ENCODE measurements at regions of chr20 and their contacts with region 1.

Region 1: GRCh38 chr20:41136680-41137613 is at the start of gene PLCG1:
- DNase-seq: peak; percentile 88
- H3K4me3 Mint-ChIP-seq: peak within 1 kb of the TSS; percentile 84
- H3K27ac Mint-ChIP-seq: peak within 1 kb of the TSS; percentile 92
- H3K4me1 Mint-ChIP-seq: peaks cover 54% of the 10 kb centered on the region
- H3K27me3 Mint-ChIP-seq: no peaks in the 10 kb centered on the region

Region 2: DNA sequence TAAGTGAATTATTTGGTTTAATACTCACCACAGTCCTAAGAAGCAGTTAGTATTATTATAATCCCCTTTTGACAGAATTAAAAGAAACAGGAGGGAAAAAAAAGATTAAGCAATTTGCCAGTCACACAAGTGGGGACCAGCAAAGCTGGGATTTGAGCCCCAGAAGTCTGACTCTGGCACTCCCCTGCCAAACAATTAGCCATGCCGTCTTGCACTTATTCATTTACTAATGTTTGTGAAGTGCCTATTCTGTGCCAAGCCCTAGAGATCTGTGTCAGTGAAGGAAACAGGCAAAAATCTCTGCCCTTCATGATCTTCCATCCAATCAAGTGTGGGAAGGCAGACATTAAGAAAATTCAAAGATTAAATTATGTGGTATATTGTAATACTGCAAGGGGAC is 234.3 kb before region 1 on chr20:
- CTCF ChIA-PET with region 1: no interaction called
- DNase-seq: no peak
- H3K4me3 Mint-ChIP-seq: no peak overlapping the region
- H3K27ac Mint-ChIP-seq: no peak overlapping the region
- H3K4me1 Mint-ChIP-seq: no peaks in the 10 kb centered on the region
- H3K27me3 Mint-ChIP-seq: peaks cover 15% of the 10 kb centered on the region

Region 3: GRCh38 chr20:41119546-41120235 is 17.3 kb before region 1 on chr20:
- CTCF ChIA-PET with region 1: interaction called, 12 read pairs
- DNase-seq: no peak
- H3K4me3 Mint-ChIP-seq: no peak overlapping the region
- H3K27ac Mint-ChIP-seq: no peak overlapping the region
- H3K4me1 Mint-ChIP-seq: peaks cover 16% of the 10 kb centered on the region
- H3K27me3 Mint-ChIP-seq: no peaks in the 10 kb centered on the region

Region 4: GRCh38 chr20:41149679-41150131 is 12.8 kb after region 1 on chr20:
- CTCF ChIA-PET with region 1: interaction called, 240 read pairs
- DNase-seq: no peak
- H3K4me3 Mint-ChIP-seq: peak overlapping the region; percentile 21
- H3K27ac Mint-ChIP-seq: peak overlapping the region; percentile 85
- H3K4me1 Mint-ChIP-seq: peaks cover 98% of the 10 kb centered on the region
- H3K27me3 Mint-ChIP-seq: no peaks in the 10 kb centered on the region

Region 5: GRCh38 chr20:41178904-41179432 is 42.0 kb after region 1 on chr20:
- CTCF ChIA-PET with region 1: interaction called, 12 read pairs
- DNase-seq: peak; percentile 12
- H3K4me3 Mint-ChIP-seq: no peak overlapping the region
- H3K27ac Mint-ChIP-seq: peak overlapping the region; percentile 73
- H3K4me1 Mint-ChIP-seq: peaks cover 22% of the 10 kb centered on the region
- H3K27me3 Mint-ChIP-seq: no peaks in the 10 kb centered on the region

Region 6: DNA sequence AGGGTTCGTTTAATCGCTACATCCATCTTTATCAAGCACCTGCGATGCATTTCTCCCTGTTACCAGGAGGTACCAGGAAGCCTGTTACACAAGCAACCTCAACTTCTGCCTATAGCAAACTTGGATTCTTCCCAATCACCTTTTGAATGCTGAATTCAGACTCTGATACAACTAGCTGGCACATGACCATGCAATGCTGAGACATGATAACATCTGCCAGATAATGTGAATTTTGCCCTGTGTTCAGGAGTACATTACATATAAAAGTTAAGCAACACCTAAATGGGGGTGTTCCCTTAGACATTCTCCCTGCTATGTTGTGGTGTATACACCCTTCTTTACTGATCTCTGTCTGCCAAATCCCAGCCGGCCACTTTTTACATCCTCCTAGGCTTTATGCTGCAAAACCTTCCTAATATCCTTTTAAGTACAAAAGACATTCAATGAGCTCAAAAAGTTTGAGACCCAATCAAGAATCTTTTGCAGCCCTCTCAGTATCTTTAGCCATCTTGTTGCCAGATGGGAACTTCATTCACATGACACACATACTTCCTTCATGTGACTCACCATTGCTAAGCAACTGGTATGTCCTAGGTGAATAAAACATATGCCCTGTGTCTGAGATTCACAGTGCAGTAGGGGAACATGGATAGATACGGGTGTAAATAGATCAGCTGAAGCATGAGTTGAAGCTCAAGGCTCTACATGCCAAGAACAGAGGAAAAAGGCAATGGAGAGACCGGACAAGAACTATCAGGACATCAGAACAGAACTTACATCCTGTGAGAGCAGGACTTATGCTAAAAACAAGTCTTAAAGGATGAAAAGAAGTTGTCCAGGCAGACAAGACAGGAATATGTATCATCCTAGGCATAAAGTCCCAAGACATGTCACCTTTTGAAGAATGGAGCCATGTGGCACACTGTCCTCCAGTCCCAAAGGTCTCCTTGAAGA is 96.3 kb after region 1 on chr20:
- CTCF ChIA-PET with region 1: interaction called, 62 read pairs
- DNase-seq: no peak
- H3K4me3 Mint-ChIP-seq: no peak overlapping the region
- H3K27ac Mint-ChIP-seq: no peak overlapping the region
- H3K4me1 Mint-ChIP-seq: peaks cover 35% of the 10 kb centered on the region
- H3K27me3 Mint-ChIP-seq: no peaks in the 10 kb centered on the region

Region 7: GRCh38 chr20:41339507-41340326 is 202.8 kb after region 1 on chr20:
- CTCF ChIA-PET with region 1: interaction called, 41 read pairs
- DNase-seq: peak; percentile 88
- H3K4me3 Mint-ChIP-seq: peak overlapping the region; percentile 58
- H3K27ac Mint-ChIP-seq: no peak overlapping the region
- H3K4me1 Mint-ChIP-seq: peaks cover 13% of the 10 kb centered on the region
- H3K27me3 Mint-ChIP-seq: peaks cover 36% of the 10 kb centered on the region

Measured in activated naive CD4-positive, alpha-beta T cell treated with anti-CD3 and anti-CD28 coated beads, Interleukin-2, amount 10 ng/mL, durations not matched to agents 7 days and 5 days (primary cell).